GM12878 (cell line): ENCODE measurements at regions of chrX and their contacts with region 1.

Region 1: GRCh38 chrX:12771445-12772069 is 19.7 kb upstream of the PRPS2 start:
- DNase-seq: peak; percentile 20
- ATAC-seq: peak; percentile 100
- H3K4me3 ChIP-seq: no peak overlapping the region
- H3K27ac ChIP-seq: no peak overlapping the region
- H3K4me1 ChIP-seq: no peaks in the 10 kb centered on the region
- H3K27me3 ChIP-seq: peaks cover 0 to 8% of the 10 kb centered on the region in 2 experiments; a peak in 2 of 4 replicates
- CTCF ChIP-seq: peak; percentile 94 to 97 (median 94)
- EP300 ChIP-seq: no peak
- POLR2A ChIP-seq: no peak
- RAD21 ChIP-seq: peak; percentile 46; the same call in 1 of the 2 replicates

Region 2: DNA sequence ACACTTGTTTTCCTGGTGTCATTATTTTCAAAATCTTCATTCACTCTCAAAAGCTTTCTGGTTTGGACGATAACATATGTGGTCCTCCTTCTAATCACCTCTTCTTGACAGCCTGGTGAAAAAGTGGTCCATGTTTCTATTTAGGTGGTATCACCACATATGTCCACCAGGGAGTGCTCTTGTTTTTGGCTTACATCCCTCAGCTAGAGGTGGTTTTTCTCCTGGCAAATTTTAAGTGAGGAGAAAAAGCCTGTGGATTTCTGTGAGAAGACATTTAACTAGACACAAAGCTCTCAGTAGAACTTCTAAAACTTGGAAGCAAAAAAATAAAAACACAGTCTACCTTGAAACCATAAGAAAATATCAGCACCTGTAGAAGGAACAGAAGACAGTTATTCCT is 691.3 kb before region 1 on chrX:
- CTCF ChIA-PET with region 1: interaction called, 8 read pairs
- POLR2A ChIA-PET with region 1: no interaction called
- RAD21 ChIA-PET with region 1: no interaction called
- SMC1A ChIA-PET with region 1: no interaction called
- in situ Hi-C with region 1: no loop called
- intact Hi-C with region 1: loop called (anchors 10 kb)
- DNase-seq: no peak
- ATAC-seq: peak; percentile 66
- H3K4me3 ChIP-seq: no peak overlapping the region
- H3K27ac ChIP-seq: no peak overlapping the region
- H3K4me1 ChIP-seq: no peaks in the 10 kb centered on the region
- H3K27me3 ChIP-seq: no peaks in the 10 kb centered on the region; a peak in 1 of 4 replicates
- CTCF ChIP-seq: peak; percentile 49 to 55 (median 54); a peak in 5 of 6 replicates
- EP300 ChIP-seq: no peak
- POLR2A ChIP-seq: no peak
- RAD21 ChIP-seq: peak; percentile 76

Region 3: DNA sequence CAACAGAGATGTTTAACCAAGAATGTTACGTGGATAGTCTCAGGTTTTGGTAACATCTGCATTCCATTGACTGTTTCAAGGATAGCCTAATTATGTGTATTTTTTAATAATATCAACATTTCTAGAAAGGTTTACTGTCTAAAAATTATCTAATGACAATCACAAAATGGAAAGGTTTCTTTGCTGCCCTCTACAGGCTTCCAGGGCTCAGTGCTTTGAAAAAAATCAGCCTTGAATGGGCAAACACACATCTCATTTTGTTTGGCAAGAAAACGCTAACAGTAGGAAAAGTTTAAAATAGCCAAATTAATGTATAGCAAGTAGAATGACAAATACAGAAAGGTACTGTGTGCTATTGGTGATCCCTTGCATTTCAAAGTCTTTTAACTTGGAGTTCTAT is 203.7 kb before region 1 on chrX:
- CTCF ChIA-PET with region 1: interaction called, 12 read pairs
- POLR2A ChIA-PET with region 1: no interaction called
- RAD21 ChIA-PET with region 1: no interaction called
- SMC1A ChIA-PET with region 1: no interaction called
- in situ Hi-C with region 1: no loop called
- intact Hi-C with region 1: no loop called
- DNase-seq: no peak
- ATAC-seq: 0 out of 3 replicates have a peak, but pooled peaks have one; percentile 18
- H3K4me3 ChIP-seq: no peak overlapping the region
- H3K27ac ChIP-seq: no peak overlapping the region
- H3K4me1 ChIP-seq: no peaks in the 10 kb centered on the region; the same call in 1 of the 2 replicates
- H3K27me3 ChIP-seq: no peaks in the 10 kb centered on the region; a peak in 1 of 4 replicates
- CTCF ChIP-seq: peak; percentile 65 to 74 (median 67)
- EP300 ChIP-seq: no peak
- POLR2A ChIP-seq: no peak
- RAD21 ChIP-seq: peak; percentile 56

Region 4: GRCh38 chrX:12758292-12758691 is 13.3 kb before region 1 on chrX:
- CTCF ChIA-PET with region 1: interaction called, 44 read pairs
- POLR2A ChIA-PET with region 1: no interaction called
- RAD21 ChIA-PET with region 1: interaction called, 8 read pairs
- SMC1A ChIA-PET with region 1: interaction called, 11 read pairs
- in situ Hi-C with region 1: no loop called
- intact Hi-C with region 1: no loop called
- DNase-seq: no peak
- ATAC-seq: peak; percentile 35; the same call in 1 of the 3 replicates
- H3K4me3 ChIP-seq: no peak overlapping the region
- H3K27ac ChIP-seq: no peak overlapping the region
- H3K4me1 ChIP-seq: no peaks in the 10 kb centered on the region
- H3K27me3 ChIP-seq: peaks cover 1 to 2% of the 10 kb centered on the region in 2 experiments; a peak in 2 of 4 replicates
- CTCF ChIP-seq: no peak
- EP300 ChIP-seq: no peak
- POLR2A ChIP-seq: no peak
- RAD21 ChIP-seq: no peak

Region 5: DNA sequence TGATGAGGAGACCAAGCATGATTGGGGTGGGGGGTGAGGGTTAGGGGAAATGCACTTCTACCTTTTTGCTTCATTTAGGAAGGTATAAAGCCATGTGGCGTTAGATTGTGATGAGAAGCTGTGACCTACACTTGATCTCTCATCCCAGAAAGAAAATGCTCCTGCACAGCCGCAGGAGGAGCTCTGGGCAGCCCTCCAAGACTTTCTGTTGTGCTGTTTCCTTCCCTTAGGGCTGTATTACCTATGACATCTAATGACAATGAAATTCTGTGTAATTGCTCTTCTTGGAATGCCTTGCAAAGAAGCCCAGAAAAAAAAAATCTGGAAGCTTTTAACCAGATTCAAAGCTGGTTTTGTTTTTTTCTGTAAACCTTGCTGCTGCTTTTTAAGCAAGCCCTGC is 33.1 kb after region 1 on chrX:
- CTCF ChIA-PET with region 1: interaction called, 27 read pairs
- POLR2A ChIA-PET with region 1: no interaction called
- RAD21 ChIA-PET with region 1: no interaction called
- SMC1A ChIA-PET with region 1: no interaction called
- in situ Hi-C with region 1: no loop called
- intact Hi-C with region 1: no loop called
- DNase-seq: no peak
- ATAC-seq: no peak
- H3K4me3 ChIP-seq: no peak overlapping the region
- H3K27ac ChIP-seq: no peak overlapping the region
- H3K4me1 ChIP-seq: no peaks in the 10 kb centered on the region
- H3K27me3 ChIP-seq: no peaks in the 10 kb centered on the region
- CTCF ChIP-seq: no peak
- EP300 ChIP-seq: no peak
- POLR2A ChIP-seq: no peak
- RAD21 ChIP-seq: no peak